ENCODE measurements at regions of chr4 and their contacts with region 1.

Region 1: DNA sequence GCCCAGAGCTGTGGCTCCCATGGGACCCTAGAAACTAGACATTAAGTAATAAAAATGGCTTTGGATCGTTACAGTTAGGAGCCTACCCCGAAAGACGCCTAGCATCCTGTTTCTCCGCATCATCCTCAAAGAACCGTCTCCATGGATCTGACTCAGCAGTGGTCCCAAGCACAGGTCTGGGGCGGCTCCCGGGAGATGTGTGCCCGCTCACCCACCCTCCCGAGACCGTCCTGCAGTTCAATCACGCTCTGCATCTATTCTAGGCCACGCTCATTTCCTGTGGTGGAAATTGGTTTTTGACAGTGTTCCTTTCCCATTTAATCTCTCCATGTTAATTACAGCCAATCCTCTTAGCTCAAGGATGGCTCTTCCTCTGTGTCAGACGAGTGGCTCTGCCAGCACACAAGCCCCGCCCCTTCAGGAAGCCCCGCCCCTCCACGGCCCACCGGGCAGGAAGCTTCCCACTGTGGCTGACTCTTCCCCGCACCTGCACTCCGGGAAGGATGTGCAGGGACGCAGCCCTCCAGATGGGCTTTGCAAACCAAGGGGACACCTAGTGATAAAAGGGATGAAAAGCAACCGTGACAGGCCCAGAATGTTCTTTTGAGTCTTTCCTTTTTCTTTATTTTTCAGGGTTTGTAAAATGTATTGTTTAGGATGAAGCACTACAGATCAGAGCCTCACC is 34.5 kb upstream of the HELT start:
- DNase-seq: peak; percentile 59
- H3K4me3 ChIP-seq: no peak overlapping the region
- H3K27ac ChIP-seq: no peak overlapping the region
- H3K4me1 ChIP-seq: no peaks in the 10 kb centered on the region
- H3K27me3 ChIP-seq: peaks cover 2% of the 10 kb centered on the region
- CTCF ChIP-seq: peak; percentile 32 to 70

Region 2: GRCh38 chr4:184263910-184264732 is 719.7 kb before region 1 on chr4:
- CTCF ChIA-PET with region 1: no interaction called
- dilution Hi-C with region 1: no loop called
- in situ Hi-C with region 1: no loop called
- intact Hi-C with region 1: loop called (anchors 2 kb)
- DNase-seq: peak; percentile 79
- H3K4me3 ChIP-seq: no peak overlapping the region
- H3K27ac ChIP-seq: no peak overlapping the region
- H3K4me1 ChIP-seq: peaks cover 26% of the 10 kb centered on the region
- H3K27me3 ChIP-seq: peaks cover under 1% of the 10 kb centered on the region
- CTCF ChIP-seq: peak; percentile 79 to 80

Region 3: DNA sequence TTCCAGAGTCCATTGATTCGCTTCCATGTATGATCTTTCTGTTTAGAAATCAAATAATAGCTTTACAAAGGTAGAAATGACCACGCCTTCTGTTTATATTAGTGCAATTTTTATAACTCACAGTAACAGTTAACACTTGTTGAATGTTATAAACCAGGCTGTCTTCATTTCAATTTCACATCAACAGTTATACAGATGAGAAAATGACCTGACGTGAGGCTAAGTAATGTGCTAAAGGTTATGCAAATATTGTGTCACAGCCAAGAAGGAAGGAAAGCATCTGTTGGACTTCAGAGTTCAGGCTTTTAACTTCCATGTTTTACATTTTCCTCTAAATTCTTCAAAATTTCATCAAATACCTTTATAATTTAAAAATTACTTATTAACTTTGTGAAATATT is 348.4 kb before region 1 on chr4:
- CTCF ChIA-PET with region 1: no interaction called
- dilution Hi-C with region 1: no loop called
- in situ Hi-C with region 1: no loop called
- intact Hi-C with region 1: no loop called
- DNase-seq: no peak
- H3K4me3 ChIP-seq: no peak overlapping the region
- H3K27ac ChIP-seq: no peak overlapping the region
- H3K4me1 ChIP-seq: no peaks in the 10 kb centered on the region
- H3K27me3 ChIP-seq: no peaks in the 10 kb centered on the region
- CTCF ChIP-seq: no peak

Region 4: GRCh38 chr4:184762100-184762499 is 221.7 kb before region 1 on chr4:
- CTCF ChIA-PET with region 1: no interaction called
- dilution Hi-C with region 1: no loop called
- in situ Hi-C with region 1: loop called in 1 of 2 experiments (anchors 10 kb)
- intact Hi-C with region 1: no loop called
- DNase-seq: no peak
- H3K4me3 ChIP-seq: no peak overlapping the region
- H3K27ac ChIP-seq: no peak overlapping the region
- H3K4me1 ChIP-seq: no peaks in the 10 kb centered on the region
- H3K27me3 ChIP-seq: no peaks in the 10 kb centered on the region
- CTCF ChIP-seq: no peak

Region 5: GRCh38 chr4:185039508-185040273 is 55.9 kb after region 1 on chr4:
- CTCF ChIA-PET with region 1: no interaction called
- dilution Hi-C with region 1: no loop called
- in situ Hi-C with region 1: no loop called
- intact Hi-C with region 1: no loop called
- DNase-seq: peak; percentile 35
- H3K4me3 ChIP-seq: peak overlapping the region; percentile 31 to 42 (median 32)
- H3K27ac ChIP-seq: no peak overlapping the region
- H3K4me1 ChIP-seq: no peaks in the 10 kb centered on the region
- H3K27me3 ChIP-seq: no peaks in the 10 kb centered on the region
- CTCF ChIP-seq: peak; percentile 71 to 78

Region 6: GRCh38 chr4:185754961-185755360 is 771.1 kb after region 1 on chr4:
- CTCF ChIA-PET with region 1: no interaction called
- dilution Hi-C with region 1: no loop called
- in situ Hi-C with region 1: no loop called
- intact Hi-C with region 1: no loop called
- DNase-seq: no peak
- H3K4me3 ChIP-seq: no peak overlapping the region
- H3K27ac ChIP-seq: no peak overlapping the region
- H3K4me1 ChIP-seq: no peaks in the 10 kb centered on the region
- H3K27me3 ChIP-seq: no peaks in the 10 kb centered on the region
- CTCF ChIP-seq: no peak

Region 7: GRCh38 chr4:186266729-186267456 is 1283.1 kb after region 1 on chr4:
- CTCF ChIA-PET with region 1: interaction called, 29 read pairs
- dilution Hi-C with region 1: no loop called
- in situ Hi-C with region 1: no loop called
- intact Hi-C with region 1: no loop called
- DNase-seq: no peak
- H3K4me3 ChIP-seq: no peak overlapping the region
- H3K27ac ChIP-seq: no peak overlapping the region
- H3K4me1 ChIP-seq: no peaks in the 10 kb centered on the region
- H3K27me3 ChIP-seq: no peaks in the 10 kb centered on the region
- CTCF ChIP-seq: no peak

Measured in mammary epithelial cell (primary cell).